Thyroid gland (tissue), 4 donors: ENCODE measurements at regions of chr9 and their contacts with region 1.

Region 1: DNA sequence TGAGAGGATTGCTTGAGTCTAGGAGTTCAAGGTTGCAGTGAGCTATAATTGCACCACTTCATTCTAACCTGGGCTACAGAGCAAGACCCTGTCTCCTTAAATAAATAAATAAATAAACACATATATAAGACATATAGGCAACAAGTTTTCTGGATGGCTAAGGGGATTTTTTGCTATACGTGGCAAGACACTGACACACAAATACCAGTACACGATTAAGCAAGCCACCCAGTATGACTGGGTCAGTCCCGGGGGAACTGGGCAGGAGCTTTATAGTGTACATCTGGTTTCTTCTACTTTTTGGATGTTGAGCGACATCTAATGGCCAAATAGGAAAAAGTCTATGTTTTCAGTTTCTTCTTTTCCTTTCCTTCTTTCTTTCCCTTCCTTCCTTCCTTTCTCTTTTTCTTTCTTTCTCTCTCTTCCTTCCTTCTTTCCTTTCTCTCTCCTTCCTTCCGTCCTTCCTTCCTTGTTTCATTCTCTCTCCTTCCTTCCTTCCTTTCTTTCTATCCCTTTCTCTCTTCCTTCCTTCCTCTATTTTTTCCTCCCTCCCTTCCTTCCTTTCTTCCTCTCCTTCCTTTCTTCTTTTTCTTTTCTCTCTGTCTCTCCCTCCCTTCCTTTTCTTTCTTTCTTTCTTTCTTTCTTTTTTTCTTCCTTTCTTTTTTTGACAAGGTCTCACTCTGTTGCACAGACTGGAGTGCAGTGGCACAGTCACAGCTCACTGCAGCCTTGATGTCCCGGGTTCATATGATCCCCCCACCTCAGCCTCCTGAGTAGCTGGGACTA is 47.0 kb upstream of the PLIN2 start:
- DNase-seq: peak; percentile 30 to 46
- H3K4me3 ChIP-seq: no peak overlapping the region
- H3K27ac ChIP-seq: no peak overlapping the region
- H3K4me1 ChIP-seq: peaks cover 7 to 8% of the 10 kb centered on the region in 2 donors
- H3K27me3 ChIP-seq: no peaks in the 10 kb centered on the region
- CTCF ChIP-seq: peak in 4 of 6 experiments; percentile 40 to 79 (median 53)
- POLR2A ChIP-seq: no peak

Region 2: GRCh38 chr9:19102631-19103345 is 71.5 kb before region 1 on chr9 and contains the start of gene HAUS6:
- intact Hi-C with region 1: loop called (anchors 10 kb)
- DNase-seq: peak; percentile 95 to 97
- H3K4me3 ChIP-seq: peak within 1 kb of the TSS; percentile 45 to 74 (median 57)
- H3K27ac ChIP-seq: peak within 1 kb of the TSS; percentile 16 to 95 (median 74)
- H3K4me1 ChIP-seq: peaks cover 8 to 9% of the 10 kb centered on the region in 2 donors
- H3K27me3 ChIP-seq: no peaks in the 10 kb centered on the region
- CTCF ChIP-seq: peak in 5 of 6 experiments; percentile 47 to 75 (median 72)
- POLR2A ChIP-seq: peak in 1 of 2 donors; percentile 74
- total RNA-seq, gene HAUS6: 5.9 to 8.5 (median 7.9) TPM